ENCODE measurements at regions of chr6 and their contacts with region 1.

Region 1: DNA sequence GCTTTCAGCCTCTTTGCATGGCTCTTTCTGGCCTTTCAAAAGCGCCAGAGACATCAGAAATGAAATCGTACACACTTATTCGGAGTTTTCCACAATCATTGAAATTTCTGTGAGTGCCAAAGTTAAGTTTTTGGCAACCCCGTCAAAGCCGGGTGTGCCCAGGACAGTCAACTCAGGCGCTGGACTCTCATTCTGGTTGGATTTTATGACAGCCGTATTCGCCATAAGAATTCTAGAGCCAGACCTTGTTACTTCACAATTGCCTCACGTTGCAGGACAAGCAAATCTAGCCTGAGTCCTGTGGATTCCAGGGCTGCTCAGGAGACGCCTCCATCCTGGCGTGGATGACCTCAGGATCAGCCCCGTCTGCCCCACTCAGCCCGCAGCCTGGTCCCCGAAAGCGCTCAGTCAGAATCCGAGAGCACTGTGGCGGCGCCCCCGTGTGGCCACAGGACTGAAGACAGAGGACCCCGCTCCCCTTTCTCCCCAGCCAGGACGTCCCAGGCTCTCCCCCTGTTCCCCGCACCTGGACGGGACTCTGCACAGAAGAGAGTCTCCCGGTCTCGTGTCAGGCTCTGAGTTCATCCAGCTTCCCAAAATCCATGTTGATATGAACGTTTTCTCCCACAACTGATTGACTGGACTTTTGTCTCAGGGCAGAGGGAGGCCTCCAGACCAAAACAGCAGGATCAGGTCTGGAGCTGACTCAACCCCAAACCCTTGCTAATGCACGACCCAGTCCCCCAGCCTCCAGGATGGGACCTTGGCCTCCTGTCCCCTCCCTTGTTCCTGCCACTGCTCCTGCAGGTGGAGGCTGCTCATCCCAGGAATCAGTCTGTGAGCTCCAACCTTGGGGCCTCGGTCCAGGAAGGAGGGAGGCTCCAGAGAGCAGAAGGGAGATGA is 38.2 kb downstream of the MICA start:
- DNase-seq: peak; percentile 79 to 87 (median 84)
- ATAC-seq: peak; percentile 95
- H3K4me3 ChIP-seq: no peak overlapping the region
- H3K27ac ChIP-seq: no peak overlapping the region
- H3K4me1 ChIP-seq: peaks cover 7% of the 10 kb centered on the region
- H3K27me3 ChIP-seq: no peaks in the 10 kb centered on the region
- CTCF ChIP-seq: peak; percentile 68 to 87 (median 79)
- POLR2A ChIP-seq: no peak

Region 2: DNA sequence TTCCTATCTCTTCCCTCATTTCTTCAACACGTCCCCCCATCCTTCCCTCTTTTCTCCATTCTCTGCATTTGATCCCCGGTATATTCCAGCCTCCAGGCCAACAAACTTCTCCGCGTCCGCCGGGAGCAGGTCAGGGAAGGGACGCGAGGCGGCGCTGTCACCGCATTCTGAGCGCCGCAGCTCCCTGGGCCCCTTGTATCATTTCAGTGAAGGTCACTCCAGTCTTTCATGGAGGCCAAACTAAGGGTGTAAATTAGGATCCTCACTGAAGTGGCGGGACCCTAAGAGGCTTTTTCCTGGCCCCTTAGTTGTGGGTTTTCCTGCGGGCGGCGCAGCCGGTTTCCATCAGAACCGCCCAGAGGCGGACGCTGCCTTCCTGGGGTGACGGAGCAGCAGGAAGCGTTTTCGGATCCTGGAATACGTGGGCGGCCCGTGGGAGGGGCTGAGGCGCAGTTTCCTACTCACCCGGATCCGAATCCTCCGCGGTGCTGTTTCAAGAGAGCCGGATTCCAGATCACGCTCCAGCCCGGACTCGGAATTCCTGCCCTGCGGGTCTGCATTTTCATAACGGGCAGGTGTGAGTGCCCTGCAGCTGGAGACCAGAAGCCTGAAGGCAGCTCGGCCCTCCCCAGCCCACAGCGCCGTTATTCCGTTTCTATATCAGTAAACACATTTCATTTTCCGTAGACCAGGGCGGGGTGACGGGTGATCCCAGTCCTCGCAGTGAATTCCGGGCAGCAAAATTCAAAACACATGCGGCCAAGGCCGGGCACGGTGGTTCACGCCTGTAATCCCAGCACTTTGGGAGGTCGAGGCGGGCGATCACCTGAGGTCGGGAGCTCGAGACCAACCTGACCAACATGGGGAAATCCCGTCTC is 41.8 kb before region 1 on chr6:
- intact Hi-C with region 1: loop called (anchors 5 kb)
- DNase-seq: peak; percentile 92 to 95 (median 93)
- ATAC-seq: peak; percentile 79
- H3K4me3 ChIP-seq: peak overlapping the region; percentile 26 to 40
- H3K27ac ChIP-seq: peak overlapping the region; percentile 95 to 99 (median 98)
- H3K4me1 ChIP-seq: peaks cover 53% of the 10 kb centered on the region
- H3K27me3 ChIP-seq: no peaks in the 10 kb centered on the region
- CTCF ChIP-seq: peak; percentile 80 to 98 (median 87)
- POLR2A ChIP-seq: peak; percentile 33 to 81 (median 65)